ENCODE measurements at regions of chr16 and their contacts with region 1.

Region 1: DNA sequence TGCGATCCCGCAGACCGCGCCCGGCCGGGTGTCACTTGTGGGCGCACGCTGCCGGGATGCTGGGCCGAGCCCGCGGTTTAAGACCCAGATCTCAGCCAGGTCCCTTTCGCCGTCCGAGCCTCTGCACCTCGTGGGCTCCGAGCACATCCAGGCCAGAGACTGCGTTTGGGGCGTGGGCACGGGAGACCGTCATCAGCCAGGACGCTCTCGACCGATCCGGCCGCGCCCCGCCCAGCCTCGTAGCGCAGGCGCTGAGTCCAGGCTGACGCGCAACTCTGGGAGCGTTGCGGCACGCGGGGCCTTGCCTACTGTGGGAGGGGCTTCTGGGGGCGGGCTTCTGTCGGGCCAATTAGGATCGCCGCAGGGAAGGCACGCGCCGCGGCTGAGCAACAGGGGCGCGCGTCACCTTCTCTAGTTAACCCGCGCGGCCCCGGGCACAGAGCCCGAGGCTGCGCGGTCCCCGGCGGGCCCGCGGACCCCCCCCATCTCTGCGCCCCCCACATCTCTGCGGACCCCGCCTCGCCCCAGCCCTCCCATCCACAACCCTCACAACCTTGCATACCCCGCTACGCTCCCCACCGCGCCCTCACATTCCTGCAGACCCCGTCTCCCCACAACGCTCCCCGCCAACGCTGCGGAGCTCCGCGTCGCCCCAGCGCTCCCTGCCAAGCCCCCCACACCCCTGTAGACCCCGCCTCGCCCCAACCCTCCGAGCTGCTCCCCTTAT is 722 bp upstream of the CEMP1 start:
- DNase-seq: peak; percentile 91 to 99 (median 97)
- ATAC-seq: peak; percentile 85 to 96 (median 95)
- H3K4me3 ChIP-seq: peak overlapping the region; percentile 80 to 95
- H3K4me3 Mint-ChIP-seq: peak overlapping the region; percentile 93 to 97 (median 96)
- H3K27ac ChIP-seq: peak overlapping the region; percentile 99
- H3K27ac Mint-ChIP-seq: peak overlapping the region; percentile 98
- H3K4me1 ChIP-seq: peaks cover under 1 to 35% of the 10 kb centered on the region in 2 experiments
- H3K4me1 Mint-ChIP-seq: peaks cover 19 to 23% (median 19%) of the 10 kb centered on the region in 3 donors
- H3K27me3 ChIP-seq: no peaks in the 10 kb centered on the region
- H3K27me3 Mint-ChIP-seq: no peaks in the 10 kb centered on the region

Region 2: GRCh38 chr16:2467521-2468151 is 64.3 kb before region 1 on chr16:
- CTCF ChIA-PET with region 1: no interaction called
- POLR2A ChIA-PET with region 1: interaction called in 1 of 2 experiments, 10 read pairs
- DNase-seq: peak in 1 of 35 experiments; percentile 22
- ATAC-seq: peak in 3 of 4 experiments; percentile 10 to 42 (median 14)
- H3K4me3 ChIP-seq: no peak overlapping the region
- H3K4me3 Mint-ChIP-seq: no peak overlapping the region
- H3K27ac ChIP-seq: no peak overlapping the region
- H3K27ac Mint-ChIP-seq: no peak overlapping the region
- H3K4me1 ChIP-seq: peaks cover 2 to 36% of the 10 kb centered on the region in 2 experiments
- H3K4me1 Mint-ChIP-seq: peaks cover 4 to 16% (median 6%) of the 10 kb centered on the region in 3 donors
- H3K27me3 ChIP-seq: peaks cover 3 to 56% of the 10 kb centered on the region in 2 experiments
- H3K27me3 Mint-ChIP-seq: peaks cover 14 to 29% of the 10 kb centered on the region in 2 donors

Region 3: DNA sequence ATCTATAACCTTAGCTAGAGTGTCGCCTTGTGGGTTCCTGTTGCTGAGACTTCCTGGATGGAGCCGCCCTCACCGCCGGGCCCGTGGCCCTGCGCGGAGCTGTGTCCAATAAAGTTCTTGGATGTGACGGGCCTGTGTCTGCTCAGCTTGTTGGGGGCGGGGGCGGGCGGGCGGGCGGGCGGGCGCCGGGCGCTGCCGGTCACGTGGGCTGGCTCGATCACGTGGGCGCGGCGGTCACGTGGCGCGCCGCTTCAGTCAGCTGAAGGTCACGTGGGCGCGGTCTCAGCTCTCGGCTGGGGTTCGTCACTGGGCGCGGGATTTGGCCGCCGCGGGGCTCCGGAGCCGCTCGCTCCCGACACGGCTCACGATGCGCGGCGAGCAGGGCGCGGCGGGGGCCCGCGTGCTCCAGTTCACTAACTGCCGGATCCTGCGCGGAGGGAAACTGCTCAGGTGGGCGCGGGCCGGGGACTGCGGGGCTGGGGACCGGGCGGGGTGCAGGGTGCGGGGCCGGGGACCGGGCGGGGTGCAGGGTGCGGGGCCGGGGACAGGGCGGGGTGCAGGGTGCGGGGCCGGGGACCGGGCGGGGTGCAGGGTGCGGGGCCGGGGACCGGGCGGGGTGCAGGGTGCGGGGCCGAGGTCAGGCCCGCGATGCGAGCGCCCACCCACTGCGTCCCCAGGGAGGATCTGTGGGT is 11.7 kb before region 1 on chr16 and contains the start of gene AMDHD2:
- CTCF ChIA-PET with region 1: interaction called in 1 of 2 experiments, 4 read pairs
- POLR2A ChIA-PET with region 1: interaction called, 7 to 31 read pairs
- DNase-seq: peak; percentile 64 to 97 (median 88)
- ATAC-seq: peak; percentile 67 to 76 (median 72)
- H3K4me3 ChIP-seq: peak within 1 kb of the TSS; percentile 60 to 64
- H3K4me3 Mint-ChIP-seq: peak within 1 kb of the TSS; percentile 84 to 90 (median 86)
- H3K27ac ChIP-seq: peak within 1 kb of the TSS; percentile 84
- H3K27ac Mint-ChIP-seq: peak within 1 kb of the TSS; percentile 91 to 92
- H3K4me1 ChIP-seq: peaks cover 20 to 65% of the 10 kb centered on the region in 2 experiments
- H3K4me1 Mint-ChIP-seq: peaks cover 66 to 68% (median 67%) of the 10 kb centered on the region in 3 donors
- H3K27me3 ChIP-seq: no peaks in the 10 kb centered on the region
- H3K27me3 Mint-ChIP-seq: no peaks in the 10 kb centered on the region
- total RNA-seq, gene AMDHD2: 104 to 215 (median 122) TPM

Region 4: DNA sequence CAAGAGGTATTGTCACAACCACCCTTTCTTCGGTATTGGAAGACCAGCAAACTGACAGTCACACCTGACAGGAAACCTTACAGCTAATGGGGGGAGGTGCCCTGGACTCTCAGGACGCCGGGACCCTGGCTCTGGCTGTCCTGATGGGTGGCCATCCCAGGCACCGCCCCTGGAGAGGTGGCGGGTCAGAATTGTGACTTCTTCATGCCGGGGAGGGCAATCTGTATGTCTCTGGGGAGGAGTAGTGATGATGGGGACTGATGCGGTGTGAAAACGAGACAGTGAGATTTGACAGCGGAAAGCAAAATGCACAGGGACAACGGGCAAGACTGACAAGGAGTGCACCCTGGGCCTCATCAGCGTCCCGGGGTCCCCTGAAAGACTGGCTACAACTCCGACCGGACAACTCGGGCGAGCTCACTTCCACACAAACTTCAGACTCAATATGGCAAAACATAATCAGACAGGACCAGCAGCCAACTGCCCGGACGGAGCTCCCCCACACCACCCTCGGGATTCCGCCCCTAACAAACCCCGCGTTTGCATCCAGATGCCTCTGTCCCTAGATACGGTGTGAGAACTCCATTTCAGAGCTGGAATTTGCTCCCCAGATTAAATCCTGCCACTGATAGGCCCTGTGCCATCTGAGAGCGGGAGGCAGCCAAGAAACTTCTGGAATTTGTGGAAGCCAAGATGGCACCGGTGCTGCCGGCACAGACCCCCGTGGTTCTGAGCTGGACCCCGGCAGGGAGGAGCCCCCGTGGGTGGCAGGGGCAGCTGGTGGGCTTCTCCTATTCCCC is 1432.2 kb after region 1 on chr16:
- CTCF ChIA-PET with region 1: interaction called in 1 of 2 experiments, 3 read pairs
- POLR2A ChIA-PET with region 1: interaction called in 1 of 2 experiments, 14 read pairs
- DNase-seq: no peak
- ATAC-seq: no peak
- H3K4me3 ChIP-seq: no peak overlapping the region
- H3K4me3 Mint-ChIP-seq: no peak overlapping the region
- H3K27ac ChIP-seq: peak overlapping the region; percentile 75
- H3K27ac Mint-ChIP-seq: peak overlapping the region; percentile 62 to 80
- H3K4me1 ChIP-seq: peaks cover 0 to 23% of the 10 kb centered on the region in 2 experiments
- H3K4me1 Mint-ChIP-seq: peaks cover 11 to 29% (median 27%) of the 10 kb centered on the region in 3 donors
- H3K27me3 ChIP-seq: peaks cover 0 to 5% of the 10 kb centered on the region in 2 experiments
- H3K27me3 Mint-ChIP-seq: no peaks in the 10 kb centered on the region

Region 5: GRCh38 chr16:4147236-4147635 is 1615.3 kb after region 1 on chr16:
- CTCF ChIA-PET with region 1: no interaction called
- POLR2A ChIA-PET with region 1: no interaction called
- DNase-seq: no peak
- ATAC-seq: no peak
- H3K4me3 ChIP-seq: no peak overlapping the region
- H3K4me3 Mint-ChIP-seq: no peak overlapping the region
- H3K27ac ChIP-seq: no peak overlapping the region
- H3K27ac Mint-ChIP-seq: no peak overlapping the region
- H3K4me1 ChIP-seq: peaks cover 0 to 12% of the 10 kb centered on the region in 2 experiments
- H3K4me1 Mint-ChIP-seq: peaks cover 0 to 11% (median 5%) of the 10 kb centered on the region in 3 donors
- H3K27me3 ChIP-seq: peaks cover 0 to 16% of the 10 kb centered on the region in 2 experiments
- H3K27me3 Mint-ChIP-seq: no peaks in the 10 kb centered on the region

Measured in T-cell (primary cell).